A673 (cell line): ENCODE measurements at regions of chr2 and their contacts with region 1.

Region 1: GRCh38 chr2:133579274-133579673 is 11.0 kb upstream of the NCKAP5 start:
- DNase-seq: no peak
- H3K4me3 ChIP-seq: no peak overlapping the region
- H3K27ac ChIP-seq: no peak overlapping the region
- H3K4me1 ChIP-seq: peaks cover 11% of the 10 kb centered on the region
- H3K27me3 ChIP-seq: no peaks in the 10 kb centered on the region
- CTCF ChIP-seq: no peak

Region 2: GRCh38 chr2:133414486-133415209 is 164.6 kb before region 1 on chr2:
- CTCF ChIA-PET with region 1: no interaction called
- POLR2A ChIA-PET with region 1: interaction called, 10 read pairs
- intact Hi-C with region 1: no loop called
- DNase-seq: no peak
- H3K4me3 ChIP-seq: no peak overlapping the region
- H3K27ac ChIP-seq: no peak overlapping the region
- H3K4me1 ChIP-seq: peaks cover 22% of the 10 kb centered on the region
- H3K27me3 ChIP-seq: no peaks in the 10 kb centered on the region
- CTCF ChIP-seq: no peak

Region 3: DNA sequence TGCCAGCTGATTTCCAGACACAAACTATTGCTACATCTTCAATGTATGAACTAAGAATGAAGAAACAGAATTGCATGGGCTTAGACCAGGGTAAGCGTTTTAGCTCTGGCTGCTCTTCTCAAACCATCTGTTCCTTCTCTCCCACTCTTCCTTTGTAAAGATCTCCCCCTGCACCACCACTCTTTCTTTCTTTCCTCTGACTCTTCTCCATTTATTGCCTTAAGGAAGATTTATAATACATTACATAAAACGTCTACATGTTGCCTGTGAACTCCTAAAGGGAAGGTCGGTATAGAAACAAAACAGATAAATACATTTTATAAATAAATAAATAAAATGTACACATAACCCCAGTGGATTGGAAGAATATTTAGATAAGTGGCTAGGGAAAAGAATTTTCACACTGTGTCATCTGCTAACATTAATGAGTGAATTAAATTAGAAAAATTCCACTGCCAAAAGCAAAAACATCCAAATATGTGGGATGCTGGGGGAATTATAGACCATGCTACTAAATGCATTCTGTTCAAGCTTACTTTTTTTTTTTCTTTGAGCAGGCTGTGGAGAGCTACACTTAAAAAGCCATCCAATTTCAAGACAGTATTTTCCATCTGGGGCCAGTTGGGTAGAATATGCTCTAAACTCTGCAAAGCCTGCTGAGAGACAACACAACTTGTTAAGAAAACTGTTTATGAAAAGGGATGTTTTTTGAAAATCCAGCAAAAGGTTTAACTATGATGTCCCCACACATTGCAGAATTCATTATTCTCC is 52.6 kb before region 1 on chr2:
- CTCF ChIA-PET with region 1: no interaction called
- POLR2A ChIA-PET with region 1: no interaction called
- intact Hi-C with region 1: loop called (anchors 2 kb)
- DNase-seq: peak; percentile 92
- H3K4me3 ChIP-seq: no peak overlapping the region
- H3K27ac ChIP-seq: peak overlapping the region; percentile 98
- H3K4me1 ChIP-seq: peaks cover 73% of the 10 kb centered on the region
- H3K27me3 ChIP-seq: no peaks in the 10 kb centered on the region
- CTCF ChIP-seq: no peak